ENCODE measurements at regions of chr16 and their contacts with region 1.

Region 1: DNA sequence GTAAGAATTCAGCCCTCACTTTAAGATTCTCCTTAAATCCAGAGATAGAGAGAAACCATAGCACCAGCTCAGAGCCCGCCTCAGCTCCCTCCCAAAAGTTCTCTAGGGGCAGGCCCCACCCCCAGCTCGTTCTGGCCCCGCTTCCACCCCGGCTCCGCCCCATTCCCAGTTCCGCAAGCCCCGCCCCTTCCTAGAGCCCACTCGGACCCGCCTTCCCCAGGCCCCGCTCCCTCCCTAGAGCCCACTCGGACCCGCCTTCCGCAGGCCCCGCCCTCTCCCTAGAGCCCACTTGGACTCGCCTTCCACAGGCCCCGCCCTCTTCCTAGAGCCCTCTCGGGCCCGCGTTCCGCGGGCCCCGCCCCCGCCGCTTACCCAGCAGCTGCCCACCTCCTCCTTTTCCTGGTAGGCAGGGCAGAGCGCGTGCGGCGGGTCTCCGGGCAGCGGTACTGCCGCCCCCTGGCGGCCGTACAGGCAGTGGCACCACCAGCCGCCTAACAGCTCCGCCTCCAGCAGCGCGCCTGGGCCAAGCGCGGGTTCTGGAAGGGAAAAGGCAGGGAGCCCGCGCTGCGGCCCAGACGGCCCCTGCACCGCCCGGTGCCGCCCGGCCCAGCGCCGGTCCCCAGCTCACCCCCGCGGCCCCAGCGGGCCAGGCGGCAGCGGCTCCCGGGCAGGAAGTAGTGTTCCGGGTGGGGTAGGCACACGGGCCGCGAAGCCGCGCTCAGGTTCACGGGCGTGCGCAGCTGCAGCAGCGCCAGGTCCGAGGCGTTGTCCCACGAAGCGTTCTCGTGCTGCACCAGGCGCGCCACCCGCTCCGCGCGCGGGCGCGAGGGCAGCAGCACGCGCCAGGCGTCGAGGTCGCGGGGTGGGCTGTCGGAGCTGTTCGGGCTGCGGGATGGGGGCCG is 6.8 kb upstream of the PRSS8 start:
- DNase-seq: peak; percentile 99
- ATAC-seq: peak; percentile 98 to 99 (median 98)
- H3K4me3 ChIP-seq: peak overlapping the region; percentile 18 to 67 (median 55)
- H3K27ac ChIP-seq: peak overlapping the region in 11 of 12 donors; percentile 75 to 91 (median 82)
- H3K4me1 ChIP-seq: peaks cover 3 to 39% (median 27%) of the 10 kb centered on the region in 12 donors
- H3K27me3 ChIP-seq: peaks cover 0 to 4% (median 0%) of the 10 kb centered on the region in 9 donors
- CTCF ChIP-seq: peak; percentile 80 to 99 (median 96)
- POLR2A ChIP-seq: peak in 1 of 2 donors; percentile 44

Region 2: GRCh38 chr16:30984669-30985400 is 157.5 kb before region 1 on chr16 and contains the start of gene HSD3B7:
- intact Hi-C with region 1: loop called in 7 of 10 experiments (anchors 2 to 10 kb)
- DNase-seq: peak; percentile 90 to 95 (median 90)
- ATAC-seq: peak; percentile 83 to 91 (median 88)
- H3K4me3 ChIP-seq: peak within 1 kb of the TSS in 11 of 12 donors; percentile 24 to 79 (median 61)
- H3K27ac ChIP-seq: peak within 1 kb of the TSS in 10 of 12 donors; percentile 26 to 82 (median 66)
- H3K4me1 ChIP-seq: peaks cover 0 to 21% (median 11%) of the 10 kb centered on the region in 12 donors
- H3K27me3 ChIP-seq: no peaks in the 10 kb centered on the region
- CTCF ChIP-seq: peak; percentile 92 to 97 (median 96)
- POLR2A ChIP-seq: peak in 1 of 2 donors; percentile 32
- total RNA-seq, gene HSD3B7: 3.8 to 27.2 (median 6.9) TPM

Region 3: GRCh38 chr16:31032736-31033708 is 109.3 kb before region 1 on chr16 and contains the start of gene STX4:
- intact Hi-C with region 1: loop called in 3 of 10 experiments (anchors 1 to 5 kb)
- DNase-seq: peak; percentile 98 to 99 (median 98)
- ATAC-seq: peak; percentile 93 to 95 (median 94)
- H3K4me3 ChIP-seq: peak within 1 kb of the TSS; percentile 73 to 100 (median 90)
- H3K27ac ChIP-seq: peak within 1 kb of the TSS; percentile 91 to 99 (median 96)
- H3K4me1 ChIP-seq: peaks cover 4 to 31% (median 18%) of the 10 kb centered on the region in 12 donors
- H3K27me3 ChIP-seq: no peaks in the 10 kb centered on the region
- CTCF ChIP-seq: no peak
- POLR2A ChIP-seq: no peak
- total RNA-seq, gene STX4: 19.5 to 65.8 (median 39.7) TPM

Region 4: GRCh38 chr16:31094424-31095120 is 47.8 kb before region 1 on chr16 and contains the start of gene VKORC1:
- intact Hi-C with region 1: loop called in 3 of 10 experiments (anchors 1 to 5 kb)
- DNase-seq: peak; percentile 95 to 97 (median 96)
- ATAC-seq: peak; percentile 92 to 98 (median 96)
- H3K4me3 ChIP-seq: peak within 1 kb of the TSS; percentile 72 to 95 (median 84)
- H3K27ac ChIP-seq: peak within 1 kb of the TSS; percentile 44 to 93 (median 88)
- H3K4me1 ChIP-seq: peaks cover 0 to 26% (median 18%) of the 10 kb centered on the region in 12 donors
- H3K27me3 ChIP-seq: no peaks in the 10 kb centered on the region
- CTCF ChIP-seq: no peak
- POLR2A ChIP-seq: peak in 1 of 2 donors; percentile 72
- total RNA-seq, gene VKORC1: 25.9 to 63.1 (median 42.0) TPM

Region 5: GRCh38 chr16:31117391-31118197 is 24.8 kb before region 1 on chr16 and contains the start of gene KAT8:
- intact Hi-C with region 1: loop called in 2 of 10 experiments (anchors 1 kb)
- DNase-seq: peak; percentile 98 to 99 (median 99)
- ATAC-seq: peak; percentile 90 to 97 (median 94)
- H3K4me3 ChIP-seq: peak within 1 kb of the TSS; percentile 41 to 97 (median 76)
- H3K27ac ChIP-seq: peak within 1 kb of the TSS; percentile 92 to 99 (median 96)
- H3K4me1 ChIP-seq: peaks cover 0 to 46% (median 32%) of the 10 kb centered on the region in 12 donors
- H3K27me3 ChIP-seq: no peaks in the 10 kb centered on the region
- CTCF ChIP-seq: no peak
- POLR2A ChIP-seq: peak; percentile 55 to 82
- total RNA-seq, gene KAT8: 52.8 to 79.8 (median 64.7) TPM

Region 6: DNA sequence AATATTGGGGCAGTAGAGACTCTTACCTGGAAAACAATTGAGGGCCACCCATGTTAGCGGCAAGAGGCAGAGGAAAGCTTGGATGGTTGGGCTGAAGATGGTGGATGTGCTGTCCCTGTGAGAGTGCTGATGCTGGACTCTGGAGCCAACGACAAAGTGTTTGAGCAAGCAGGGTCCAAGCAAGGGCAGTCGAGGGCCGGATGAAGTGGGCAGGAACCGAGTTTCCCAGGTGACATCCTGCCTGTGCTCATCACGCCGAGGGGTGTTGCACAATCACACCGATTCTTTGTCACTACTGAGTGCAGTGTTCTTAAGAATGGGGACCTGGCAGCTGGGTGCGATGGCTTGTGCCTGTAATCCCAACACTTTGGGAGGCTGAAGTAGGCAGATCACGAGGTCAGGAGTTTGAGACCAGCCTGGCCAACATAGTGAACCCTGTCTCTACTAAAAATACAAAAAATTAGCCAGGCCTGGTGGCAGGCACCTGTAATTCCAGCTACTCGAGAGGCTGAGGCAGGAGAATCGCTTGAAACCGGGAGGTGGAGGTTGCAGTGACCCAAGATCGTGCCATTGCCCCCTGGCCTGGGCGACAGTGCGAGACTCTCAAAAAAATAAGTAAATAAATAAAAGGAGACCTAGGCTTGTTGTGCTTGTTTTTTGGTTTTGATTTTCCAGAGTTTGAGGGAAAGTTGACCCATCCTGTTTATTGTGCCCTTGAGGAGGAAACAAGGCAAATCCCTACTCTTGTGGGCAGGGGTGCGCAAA is 54.1 kb after region 1 on chr16:
- intact Hi-C with region 1: no loop called
- DNase-seq: no peak
- ATAC-seq: no peak
- H3K4me3 ChIP-seq: no peak overlapping the region
- H3K27ac ChIP-seq: no peak overlapping the region
- H3K4me1 ChIP-seq: peaks cover 0 to 34% (median 3%) of the 10 kb centered on the region in 12 donors
- H3K27me3 ChIP-seq: no peaks in the 10 kb centered on the region
- CTCF ChIP-seq: no peak
- POLR2A ChIP-seq: no peak

Region 7: DNA sequence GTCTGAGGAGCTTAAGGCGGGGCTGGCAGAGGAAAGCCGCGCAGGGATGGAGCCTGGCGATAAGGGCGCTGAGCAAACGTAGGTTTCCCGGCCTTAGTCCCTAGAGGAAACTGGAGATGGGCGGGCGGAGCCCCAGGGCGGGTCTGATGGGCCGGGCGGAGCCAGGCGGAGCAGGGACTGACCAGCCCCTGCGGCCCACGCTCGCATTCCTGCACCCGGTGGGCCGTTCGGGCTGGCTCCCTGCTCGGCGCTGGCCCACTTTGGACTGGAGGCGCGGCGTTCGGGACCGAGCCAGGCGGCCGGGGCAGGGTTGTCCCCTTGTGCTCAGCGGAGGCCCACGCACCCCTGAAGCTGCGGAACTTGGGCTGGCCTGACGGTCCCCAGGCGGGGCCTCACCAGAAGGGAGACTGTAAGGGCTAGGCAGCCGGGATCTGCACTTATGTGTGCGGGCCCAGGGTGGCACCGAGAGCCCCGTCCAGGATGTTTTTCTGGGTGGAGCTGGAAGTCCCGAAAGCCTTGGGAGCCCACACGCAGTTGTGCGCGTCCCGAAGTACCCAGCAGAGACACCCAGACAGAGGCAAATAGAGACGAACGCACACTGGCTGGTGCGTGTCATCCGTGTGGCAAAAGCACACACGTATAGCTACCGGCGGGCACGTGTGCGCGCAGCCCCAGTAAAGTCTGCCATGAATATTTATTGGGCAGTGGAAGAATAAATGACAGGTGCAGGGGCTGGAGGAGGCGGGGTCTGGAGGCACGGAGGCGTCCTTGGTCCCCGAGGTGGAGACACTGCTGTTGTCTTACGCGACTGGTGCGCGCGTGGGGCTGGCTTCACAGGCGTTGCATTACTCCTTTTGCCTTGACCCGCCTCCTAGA is 73.2 kb after region 1 on chr16:
- intact Hi-C with region 1: no loop called
- DNase-seq: peak; percentile 57 to 82 (median 61)
- ATAC-seq: peak; percentile 71 to 93 (median 88)
- H3K4me3 ChIP-seq: peak overlapping the region; percentile 29 to 65 (median 52)
- H3K27ac ChIP-seq: peak overlapping the region in 1 of 12 donors; percentile 39
- H3K4me1 ChIP-seq: peaks cover 11 to 35% (median 25%) of the 10 kb centered on the region in 12 donors
- H3K27me3 ChIP-seq: peaks cover 4 to 48% (median 24%) of the 10 kb centered on the region in 9 donors
- CTCF ChIP-seq: no peak
- POLR2A ChIP-seq: no peak

Region 8: DNA sequence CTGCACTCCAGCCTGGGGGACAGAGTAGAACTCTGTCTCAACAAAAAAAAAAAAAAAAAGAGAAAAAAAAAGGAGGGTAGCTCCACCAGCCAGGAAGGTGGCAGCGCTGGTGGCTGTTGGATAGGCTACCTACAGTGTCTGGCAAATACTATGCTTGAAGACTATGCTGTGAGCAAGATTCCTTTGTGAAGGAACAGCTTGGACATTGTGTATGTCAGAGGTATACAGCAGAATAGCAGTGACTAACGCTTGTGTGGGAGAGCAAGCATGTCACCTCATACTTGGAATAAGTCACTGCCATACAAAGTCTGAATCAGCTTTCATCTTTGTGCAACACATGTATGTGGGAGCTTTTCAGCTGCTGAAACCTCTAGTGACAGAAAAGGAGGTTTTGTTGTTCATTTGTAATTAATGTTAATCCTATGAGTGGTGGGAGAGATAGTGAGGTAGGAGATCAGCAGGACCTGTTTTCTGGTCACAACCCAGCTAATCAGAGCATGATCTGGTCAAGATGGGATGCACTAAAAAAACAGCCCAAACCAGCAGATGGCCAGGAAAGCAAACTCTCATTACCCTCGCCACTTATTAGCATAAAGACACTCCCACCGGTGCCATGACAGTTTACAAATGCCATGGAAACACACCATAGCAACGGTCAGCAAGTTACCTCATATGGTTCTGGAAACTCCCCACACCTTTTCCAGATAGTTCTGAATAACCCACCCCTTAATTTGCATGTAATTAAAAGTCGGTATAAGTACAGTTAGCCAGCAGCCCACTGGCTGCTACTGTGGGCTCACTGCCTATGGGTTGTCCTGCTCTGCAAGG is 244.0 kb after region 1 on chr16:
- intact Hi-C with region 1: no loop called
- DNase-seq: no peak
- ATAC-seq: peak in 1 of 4 donors; percentile 38
- H3K4me3 ChIP-seq: no peak overlapping the region
- H3K27ac ChIP-seq: no peak overlapping the region
- H3K4me1 ChIP-seq: no peaks in the 10 kb centered on the region
- H3K27me3 ChIP-seq: peaks cover 0 to 27% (median 0%) of the 10 kb centered on the region in 9 donors
- CTCF ChIP-seq: no peak
- POLR2A ChIP-seq: no peak

Region 9: DNA sequence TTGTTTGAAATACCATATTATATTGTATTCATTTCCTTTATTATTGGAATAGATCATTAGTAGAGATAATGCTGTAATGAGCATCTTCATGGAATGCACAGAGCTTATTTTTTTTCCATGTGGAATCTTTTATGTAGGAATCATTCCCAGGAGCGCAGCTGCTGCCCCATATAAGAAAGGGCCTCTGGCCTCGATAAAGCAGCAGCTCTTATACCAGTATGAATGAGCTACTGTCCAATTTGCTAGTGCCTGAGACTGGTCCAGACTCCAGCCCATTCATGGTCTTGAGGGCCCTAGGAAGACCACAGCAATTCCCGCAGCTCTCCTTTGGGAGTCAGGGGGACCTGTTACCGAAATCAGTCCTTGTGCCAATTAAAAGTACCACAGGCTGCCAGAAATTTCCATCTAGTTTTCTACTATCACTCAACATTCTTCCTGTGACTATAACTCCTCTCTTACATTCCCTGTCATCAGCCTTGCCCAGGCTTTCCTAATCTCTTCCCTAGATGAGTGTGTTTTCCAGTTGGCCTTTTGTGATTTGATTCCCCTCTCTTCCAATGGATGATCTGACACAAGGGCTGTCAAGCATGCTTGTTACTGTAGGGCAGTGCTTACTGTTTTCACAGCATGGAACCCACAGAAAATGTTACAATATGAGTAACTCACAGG is 298.3 kb after region 1 on chr16:
- intact Hi-C with region 1: loop called in 1 of 10 experiments (anchors 10 kb)
- DNase-seq: no peak
- ATAC-seq: no peak
- H3K4me3 ChIP-seq: no peak overlapping the region
- H3K27ac ChIP-seq: peak overlapping the region in 9 of 12 donors; percentile 17 to 80 (median 46)
- H3K4me1 ChIP-seq: peaks cover 0 to 29% (median 11%) of the 10 kb centered on the region in 12 donors
- H3K27me3 ChIP-seq: no peaks in the 10 kb centered on the region
- CTCF ChIP-seq: no peak
- POLR2A ChIP-seq: no peak

Region 10: DNA sequence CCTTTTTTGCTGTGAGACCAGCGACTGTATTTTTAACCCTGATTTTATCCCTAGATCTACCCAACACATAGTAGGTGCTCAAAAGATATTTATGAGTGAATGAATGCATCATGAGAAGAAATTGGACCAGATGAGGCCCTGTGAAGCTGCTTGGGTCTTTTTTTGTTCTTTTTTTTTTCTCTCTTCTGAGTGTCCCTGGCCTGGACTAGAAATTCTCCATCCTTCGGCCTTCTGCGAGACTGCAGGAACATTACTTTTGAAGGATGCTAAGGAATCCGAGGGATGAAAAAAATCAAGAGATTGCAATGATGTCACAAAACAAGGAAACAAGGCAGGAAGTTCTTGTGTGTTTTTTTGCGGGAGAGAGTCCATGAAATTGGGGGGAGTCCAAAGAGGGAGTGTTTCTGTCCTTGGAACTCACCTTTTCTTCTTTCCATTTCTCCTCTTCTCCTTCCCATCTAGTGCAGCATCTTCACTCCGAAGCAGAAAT is 366.4 kb after region 1 on chr16:
- intact Hi-C with region 1: no loop called
- DNase-seq: no peak
- ATAC-seq: peak in 2 of 4 donors; percentile 4 to 6
- H3K4me3 ChIP-seq: peak overlapping the region; percentile 73 to 100 (median 86)
- H3K27ac ChIP-seq: peak overlapping the region; percentile 82 to 98 (median 94)
- H3K4me1 ChIP-seq: peaks cover 4 to 54% (median 45%) of the 10 kb centered on the region in 12 donors
- H3K27me3 ChIP-seq: no peaks in the 10 kb centered on the region
- CTCF ChIP-seq: no peak
- POLR2A ChIP-seq: no peak

Measured in heart left ventricle (tissue), 16 donors.